AG04450 (cell line): ENCODE measurements at regions of chr18 and their contacts with region 1.

Region 1: DNA sequence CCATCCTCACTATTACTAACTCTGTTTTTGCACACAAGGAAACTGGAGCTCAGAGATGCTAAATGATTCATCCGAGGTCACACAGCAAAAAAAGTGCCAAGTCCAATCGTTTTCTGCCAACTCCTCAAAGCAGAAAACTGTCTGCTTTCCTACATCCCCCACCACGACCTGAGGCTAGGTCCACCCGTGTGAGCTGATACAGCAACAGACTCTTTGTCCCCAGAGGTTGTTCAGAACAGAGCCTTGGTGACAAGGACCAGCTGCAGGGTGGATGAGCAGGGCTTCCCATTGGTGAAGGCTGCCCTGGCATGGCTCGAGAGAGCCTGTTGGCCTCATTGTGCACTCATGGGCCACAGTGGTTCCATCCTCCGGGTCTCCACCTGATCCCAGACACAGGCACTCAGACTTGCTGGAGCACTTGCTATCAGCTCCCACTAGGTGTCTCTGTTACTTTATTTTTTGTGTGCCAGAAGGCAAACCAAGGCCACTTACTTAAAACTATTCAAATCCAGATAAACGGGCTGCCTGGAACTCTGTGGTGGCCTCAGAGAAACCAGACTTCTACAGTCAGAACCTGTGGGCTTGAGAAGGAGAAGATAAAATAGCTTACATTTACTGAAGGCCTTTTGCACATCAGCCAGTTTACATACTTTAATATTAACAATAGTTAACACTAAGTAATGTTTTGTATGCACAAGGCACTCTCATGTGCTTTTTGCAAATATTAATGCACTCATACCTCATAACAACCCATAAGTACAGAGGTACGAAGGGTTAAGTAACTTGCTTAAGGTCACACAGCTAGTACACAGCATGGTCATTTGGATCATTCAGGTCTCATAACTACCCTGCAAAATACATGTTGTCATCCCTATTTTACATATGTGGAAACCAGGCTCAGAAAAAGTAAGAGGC is 62.9 kb upstream of the CTIF start:
- DNase-seq: peak; percentile 51
- H3K4me3 ChIP-seq: no peak overlapping the region
- H3K27ac ChIP-seq: no peak overlapping the region
- H3K27me3 ChIP-seq: peaks cover 4% of the 10 kb centered on the region
- CTCF ChIP-seq: peak; percentile 87

Region 2: DNA sequence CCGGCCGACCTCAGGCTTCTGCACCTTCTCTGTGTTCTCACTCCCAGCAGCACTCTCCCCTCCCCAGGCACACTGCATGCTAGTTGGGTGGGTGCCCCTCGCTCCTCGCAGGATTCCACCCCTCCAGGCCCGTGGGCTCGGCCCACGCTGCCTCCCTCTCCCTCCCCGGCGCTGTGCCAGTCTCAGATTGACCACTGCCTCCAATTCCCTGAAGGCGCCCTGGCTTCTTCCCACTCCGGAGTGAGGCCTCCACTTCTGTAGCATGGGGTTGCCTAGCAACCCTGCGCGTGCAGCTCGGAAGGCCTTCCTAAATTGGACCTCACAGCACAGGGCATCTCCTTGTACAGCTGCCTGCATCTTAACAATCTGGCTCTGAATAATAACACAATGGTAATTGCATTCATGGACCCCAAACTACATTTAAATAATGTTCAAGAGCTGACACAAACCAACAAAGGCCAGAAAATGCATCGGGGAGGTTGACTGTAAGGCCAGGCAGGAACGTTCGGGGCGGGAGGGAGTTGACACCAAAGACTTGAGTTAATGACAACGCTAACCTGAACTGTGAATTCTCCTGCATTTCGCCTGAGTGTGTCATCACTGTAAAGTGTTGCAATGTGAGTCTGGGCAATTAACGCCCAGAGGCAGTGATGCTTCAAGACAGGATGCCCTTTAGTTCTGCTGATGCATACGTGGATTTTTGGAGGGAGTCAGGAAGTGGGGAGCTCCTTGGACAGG is 289.7 kb before region 1 on chr18:
- CTCF ChIA-PET with region 1: no interaction called
- POLR2A ChIA-PET with region 1: no interaction called
- DNase-seq: no peak
- H3K4me3 ChIP-seq: no peak overlapping the region
- H3K27ac ChIP-seq: no peak overlapping the region
- H3K27me3 ChIP-seq: peaks cover 14% of the 10 kb centered on the region
- CTCF ChIP-seq: no peak

Region 3: DNA sequence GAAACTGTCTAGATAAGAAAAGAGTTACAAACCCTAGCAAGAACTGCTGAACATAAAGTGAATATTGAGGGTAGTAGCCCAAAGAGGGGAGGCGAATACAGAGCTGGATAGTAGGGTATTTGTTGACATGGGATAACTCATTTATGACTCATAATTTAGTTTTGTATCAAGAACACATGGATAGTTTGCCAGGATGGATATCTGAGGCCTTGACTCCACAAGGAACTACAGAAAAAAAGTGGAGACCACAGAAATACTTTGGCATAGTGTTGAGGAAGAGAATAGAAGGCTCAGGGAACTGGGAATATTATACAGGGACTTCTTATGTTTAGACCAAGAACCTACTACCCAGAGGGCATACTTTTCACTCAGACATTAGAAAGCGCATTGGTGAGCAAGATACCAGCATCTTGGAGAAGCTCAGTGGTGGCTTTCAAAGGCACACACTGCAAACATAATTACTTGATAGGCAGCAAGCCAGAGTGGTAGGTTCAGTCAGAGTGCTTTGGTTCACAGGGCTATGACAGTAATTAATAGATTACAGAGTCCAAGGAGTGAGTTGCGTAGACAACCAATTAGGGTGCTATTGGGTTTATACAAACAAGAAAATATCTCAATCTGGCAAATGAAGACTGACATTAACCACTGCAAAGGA is 14.8 kb before region 1 on chr18:
- CTCF ChIA-PET with region 1: interaction called, 23 read pairs
- POLR2A ChIA-PET with region 1: no interaction called
- DNase-seq: no peak
- H3K4me3 ChIP-seq: no peak overlapping the region
- H3K27ac ChIP-seq: no peak overlapping the region
- H3K27me3 ChIP-seq: peaks cover 14% of the 10 kb centered on the region
- CTCF ChIP-seq: no peak

Region 4: GRCh38 chr18:48488388-48488850 is 12.5 kb after region 1 on chr18:
- CTCF ChIA-PET with region 1: interaction called, 37 read pairs
- POLR2A ChIA-PET with region 1: interaction called, 12 read pairs
- DNase-seq: peak; percentile 86
- H3K4me3 ChIP-seq: no peak overlapping the region
- H3K27ac ChIP-seq: peak overlapping the region; percentile 21
- H3K27me3 ChIP-seq: no peaks in the 10 kb centered on the region
- CTCF ChIP-seq: no peak

Region 5: DNA sequence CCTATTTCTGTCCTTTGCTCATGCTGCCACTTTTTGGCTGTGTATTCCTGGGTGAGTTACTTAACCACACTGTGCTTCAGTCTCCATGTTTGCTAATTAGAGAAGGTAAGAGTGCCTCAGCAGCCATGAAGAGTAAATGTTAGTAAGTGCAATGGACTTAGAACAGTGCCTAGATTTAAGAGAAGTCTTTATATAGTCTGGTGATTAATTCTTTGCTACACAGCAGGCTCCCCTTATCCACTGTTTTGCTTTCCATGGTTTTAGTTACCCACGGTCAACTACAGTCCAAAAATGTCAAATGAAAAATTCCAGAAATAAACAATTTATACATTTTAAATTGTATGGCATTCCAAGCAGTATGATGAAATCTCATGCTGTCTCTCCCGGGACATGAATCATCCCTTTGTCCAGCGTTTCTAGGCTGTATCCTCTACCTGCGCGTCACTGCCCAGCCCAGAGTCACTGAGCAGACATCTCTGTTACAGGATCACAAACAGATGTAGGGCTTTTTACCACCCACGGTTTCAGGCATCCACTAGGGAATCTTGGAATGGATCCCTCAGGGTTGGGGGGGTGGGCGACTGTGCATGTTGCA is 153.9 kb after region 1 on chr18:
- CTCF ChIA-PET with region 1: interaction called, 15 read pairs
- POLR2A ChIA-PET with region 1: no interaction called
- DNase-seq: peak; percentile 99
- H3K4me3 ChIP-seq: no peak overlapping the region
- H3K27ac ChIP-seq: peak overlapping the region; percentile 72
- H3K27me3 ChIP-seq: no peaks in the 10 kb centered on the region
- CTCF ChIP-seq: no peak

Region 6: DNA sequence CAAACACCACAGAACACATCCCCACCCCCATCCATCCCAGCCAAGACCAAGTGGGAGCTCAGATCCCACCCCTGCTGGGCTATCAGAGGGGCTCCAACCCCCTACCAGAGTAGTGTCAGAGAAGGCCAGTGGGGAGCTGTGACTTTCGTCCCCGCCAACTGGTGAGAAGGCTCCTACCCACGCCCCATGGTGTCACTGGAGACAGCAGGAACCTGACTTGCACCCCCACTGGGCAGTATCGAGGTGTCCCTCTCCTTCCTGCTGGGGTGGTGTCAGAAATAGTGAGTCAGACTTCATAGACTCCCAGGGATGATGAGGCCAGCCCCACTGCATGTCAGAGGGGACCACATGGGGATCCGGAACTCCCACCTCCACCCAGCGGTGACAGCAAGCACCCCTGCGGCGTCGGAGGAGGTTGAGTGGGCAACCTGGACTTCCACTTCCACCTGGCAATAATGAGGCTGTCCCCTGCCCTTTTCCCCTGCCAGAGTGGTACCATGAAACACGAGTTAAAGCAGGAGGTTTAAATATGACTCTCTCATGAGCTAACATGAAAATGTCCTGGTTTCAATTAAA is 169.6 kb after region 1 on chr18:
- CTCF ChIA-PET with region 1: interaction called, 19 read pairs
- POLR2A ChIA-PET with region 1: no interaction called
- DNase-seq: no peak
- H3K4me3 ChIP-seq: no peak overlapping the region
- H3K27ac ChIP-seq: no peak overlapping the region
- H3K27me3 ChIP-seq: no peaks in the 10 kb centered on the region
- CTCF ChIP-seq: no peak

Region 7: DNA sequence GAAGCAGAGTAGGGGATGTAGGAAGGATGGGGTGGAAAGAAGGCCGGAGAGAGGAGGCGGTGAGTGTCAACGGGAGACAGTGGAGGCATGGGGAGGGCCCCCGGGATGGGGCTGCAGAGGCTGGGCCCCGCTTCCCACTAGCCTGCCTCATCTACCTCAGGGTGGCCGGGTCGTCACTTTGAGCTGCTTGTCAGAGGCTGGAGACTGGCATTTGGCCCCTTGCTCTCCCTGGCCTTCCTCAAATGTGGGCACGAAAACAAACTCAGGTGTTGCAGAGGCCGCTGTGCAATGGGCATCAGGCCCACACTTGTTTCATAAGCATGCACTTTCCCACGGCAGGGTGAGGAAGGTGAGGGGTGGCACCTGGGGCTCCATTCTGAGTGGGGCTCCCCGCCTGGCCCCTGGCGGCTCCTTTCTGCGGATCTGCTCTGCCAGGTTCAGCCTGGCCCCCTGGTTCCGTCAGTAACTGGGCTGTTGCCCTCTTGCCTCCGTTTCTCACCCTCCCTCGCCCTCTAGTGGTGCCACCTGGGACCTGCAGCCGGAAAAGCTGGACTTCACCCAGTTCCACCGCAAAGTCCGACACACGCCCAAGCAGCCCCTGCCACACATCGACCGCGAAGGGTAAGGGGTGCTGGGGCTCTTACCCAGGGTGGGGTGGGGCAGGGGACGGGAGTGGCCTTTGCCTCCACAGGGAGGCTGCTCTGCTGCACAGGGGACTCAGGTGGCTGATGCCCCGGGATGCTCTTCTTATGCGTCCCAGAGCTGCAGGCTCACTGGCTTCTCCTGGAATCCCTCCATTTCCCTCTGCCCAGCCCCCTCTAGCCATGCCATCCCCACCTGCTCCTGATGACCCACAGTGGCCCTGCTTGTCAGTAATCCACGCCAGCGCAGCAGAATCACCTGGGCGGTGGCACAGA is 188.3 kb after region 1 on chr18:
- CTCF ChIA-PET with region 1: interaction called, 61 read pairs
- POLR2A ChIA-PET with region 1: no interaction called
- DNase-seq: no peak
- H3K4me3 ChIP-seq: no peak overlapping the region
- H3K27ac ChIP-seq: no peak overlapping the region
- H3K27me3 ChIP-seq: no peaks in the 10 kb centered on the region
- CTCF ChIP-seq: peak; percentile 90

Region 8: GRCh38 chr18:48675352-48675761 is 199.5 kb after region 1 on chr18:
- CTCF ChIA-PET with region 1: interaction called, 46 read pairs
- POLR2A ChIA-PET with region 1: no interaction called
- DNase-seq: peak; percentile 63
- H3K4me3 ChIP-seq: no peak overlapping the region
- H3K27ac ChIP-seq: peak overlapping the region; percentile 39
- H3K27me3 ChIP-seq: no peaks in the 10 kb centered on the region
- CTCF ChIP-seq: peak; percentile 93